Stomach (tissue), 19 donors: ENCODE measurements at regions of chr16 and their contacts with region 1.

Region 1: GRCh38 chr16:20849587-20850390 is 43.5 kb downstream of the REXO5 start:
- DNase-seq: peak; percentile 75 to 84
- H3K4me3 ChIP-seq: no peak overlapping the region
- H3K27ac ChIP-seq: peak overlapping the region in 4 of 5 donors; percentile 73 to 80 (median 78)
- H3K4me1 ChIP-seq: peaks cover 36 to 49% (median 44%) of the 10 kb centered on the region in 4 donors
- H3K27me3 ChIP-seq: no peaks in the 10 kb centered on the region
- CTCF ChIP-seq: peak in 6 of 7 experiments; percentile 9 to 98 (median 94)
- EP300 ChIP-seq: no peak
- POLR2A ChIP-seq: no peak

Region 2: GRCh38 chr16:20711277-20711911 is 138.4 kb before region 1 on chr16:
- intact Hi-C with region 1: no loop called
- DNase-seq: peak in 1 of 2 donors; percentile 11
- H3K4me3 ChIP-seq: no peak overlapping the region
- H3K27ac ChIP-seq: peak overlapping the region in 2 of 5 donors; percentile 22 to 75
- H3K4me1 ChIP-seq: peaks cover 0 to 45% (median 8%) of the 10 kb centered on the region in 4 donors
- H3K27me3 ChIP-seq: no peaks in the 10 kb centered on the region
- CTCF ChIP-seq: no peak
- EP300 ChIP-seq: no peak
- POLR2A ChIP-seq: no peak

Region 3: GRCh38 chr16:20900299-20901067 is 50.7 kb after region 1 on chr16 and contains the starts of genes DCUN1D3 and LYRM1:
- intact Hi-C with region 1: loop called (anchors 10 kb)
- DNase-seq: peak; percentile 95 to 99
- H3K4me3 ChIP-seq: peak within 1 kb of the TSS; percentile 62 to 84 (median 69)
- H3K27ac ChIP-seq: peak within 1 kb of the TSS; percentile 98 to 99 (median 99)
- H3K4me1 ChIP-seq: peaks cover 66 to 86% (median 76%) of the 10 kb centered on the region in 4 donors
- H3K27me3 ChIP-seq: no peaks in the 10 kb centered on the region
- CTCF ChIP-seq: no peak
- EP300 ChIP-seq: peak; percentile 59
- POLR2A ChIP-seq: peak in 3 of 4 donors; percentile 64 to 95 (median 82)
- total RNA-seq, gene DCUN1D3: 3.8 to 25.7 (median 16.7) TPM
- total RNA-seq, gene LYRM1: 6.7 to 29.7 (median 21.0) TPM

Region 4: DNA sequence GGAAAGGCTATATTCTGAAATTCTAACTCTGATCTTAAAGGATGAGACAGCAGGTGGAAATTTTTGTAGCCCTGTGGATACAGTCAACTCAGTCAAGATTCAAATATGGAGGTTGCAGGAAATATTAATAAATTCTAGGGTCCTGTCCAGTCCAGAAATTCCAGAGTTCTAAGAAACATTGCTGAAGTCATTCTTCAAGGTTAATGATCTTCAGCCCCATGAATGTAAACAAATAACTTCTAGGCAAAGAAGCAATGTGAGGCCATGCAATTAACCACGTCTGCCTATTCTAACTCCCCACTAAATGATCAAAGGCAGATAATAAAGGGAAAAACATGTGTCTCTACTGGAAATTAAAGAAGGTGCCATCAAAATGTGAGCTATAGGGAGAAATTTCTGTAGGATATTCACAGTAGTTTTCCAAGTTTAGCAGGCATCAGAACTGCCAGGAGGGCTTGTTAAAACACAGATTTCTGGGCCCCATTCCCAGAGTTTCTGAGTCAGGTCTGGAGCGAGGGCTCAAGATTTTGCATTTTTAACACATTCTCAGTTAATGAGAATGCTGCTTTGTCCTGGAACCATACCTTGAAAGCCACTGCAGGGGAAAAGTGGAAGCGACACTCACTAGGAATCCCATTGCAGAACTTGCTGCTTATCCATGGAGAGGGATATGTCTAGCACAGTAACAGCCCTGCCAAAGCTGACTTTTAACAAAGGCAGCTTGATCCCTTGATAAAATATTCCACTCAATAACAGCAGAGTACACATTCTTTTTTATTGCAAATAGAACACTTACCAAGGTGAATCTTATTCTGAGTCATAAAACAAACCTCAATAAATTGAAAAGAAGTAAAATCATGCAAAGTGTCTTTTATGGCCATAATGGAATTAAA is 239.1 kb after region 1 on chr16:
- intact Hi-C with region 1: loop called (anchors 5 kb)
- DNase-seq: no peak
- H3K4me3 ChIP-seq: no peak overlapping the region
- H3K27ac ChIP-seq: no peak overlapping the region
- H3K4me1 ChIP-seq: no peaks in the 10 kb centered on the region
- H3K27me3 ChIP-seq: peaks cover 0 to 4% (median 0%) of the 10 kb centered on the region in 3 donors
- CTCF ChIP-seq: no peak
- EP300 ChIP-seq: no peak
- POLR2A ChIP-seq: no peak